AG04449 (cell line): ENCODE measurements at regions of chr17 and their contacts with region 1.

Region 1: GRCh38 chr17:32006957-32007462 is at the start of gene LRRC37B:
- DNase-seq: no peak
- H3K4me3 ChIP-seq: peak within 1 kb of the TSS; percentile 68
- CTCF ChIP-seq: peak; percentile 89

Region 2: GRCh38 chr17:31997005-31997404 is 10.0 kb before region 1 on chr17:
- CTCF ChIA-PET with region 1: interaction called, 15 read pairs
- POLR2A ChIA-PET with region 1: no interaction called
- DNase-seq: no peak
- H3K4me3 ChIP-seq: no peak overlapping the region
- CTCF ChIP-seq: no peak

Region 3: GRCh38 chr17:32020943-32021614 is 14.1 kb after region 1 on chr17:
- CTCF ChIA-PET with region 1: interaction called, 23 read pairs
- POLR2A ChIA-PET with region 1: no interaction called
- DNase-seq: no peak
- H3K4me3 ChIP-seq: no peak overlapping the region
- CTCF ChIP-seq: no peak

Region 4: DNA sequence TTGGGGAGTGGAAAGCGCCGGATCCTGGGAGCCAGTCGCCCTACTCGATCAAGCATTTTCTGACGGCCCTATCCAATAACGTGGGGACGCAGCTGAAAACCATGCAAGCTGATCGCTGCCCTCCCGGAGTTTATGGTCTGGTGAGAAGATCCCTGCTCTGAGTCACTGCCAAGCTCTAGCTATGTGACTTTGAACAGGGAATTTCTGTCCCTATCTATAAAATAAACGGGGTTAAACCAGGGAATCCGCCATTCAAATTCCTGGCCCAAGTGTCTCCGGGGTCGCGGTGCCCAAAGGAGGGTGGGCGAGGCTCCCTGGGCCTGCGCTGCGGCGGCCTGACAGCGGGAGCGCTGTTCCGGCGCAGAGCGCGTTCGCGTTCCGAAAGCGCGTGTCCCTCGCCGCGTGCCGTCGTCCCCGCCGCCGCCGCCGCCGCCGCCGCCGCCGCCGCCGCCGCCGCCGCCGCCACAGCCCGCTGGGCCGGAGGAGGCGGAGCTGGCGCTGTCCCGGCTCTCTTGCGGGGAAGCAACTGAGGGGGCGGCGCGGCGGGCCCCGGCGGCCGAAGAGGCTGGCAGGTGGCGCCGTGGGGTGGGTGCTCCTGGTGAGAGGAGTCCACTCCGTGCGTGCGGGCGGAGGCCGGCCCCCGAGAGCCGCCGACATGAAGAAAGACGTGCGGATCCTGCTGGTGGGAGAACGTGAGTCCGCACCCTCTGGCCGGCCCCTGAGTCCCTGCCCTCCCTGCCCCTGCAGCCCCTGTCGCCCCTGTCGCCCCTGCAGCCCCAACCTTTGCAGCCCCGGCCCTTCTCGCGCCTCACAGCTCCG is 135.2 kb after region 1 on chr17 and contains the start of gene RHOT1:
- CTCF ChIA-PET with region 1: interaction called, 102 read pairs
- POLR2A ChIA-PET with region 1: no interaction called
- DNase-seq: peak; percentile 46
- H3K4me3 ChIP-seq: peak within 1 kb of the TSS; percentile 92
- CTCF ChIP-seq: peak; percentile 83